Dorsolateral prefrontal cortex (tissue), 120 donors: ENCODE measurements at regions of chr13 and their contacts with region 1.

Region 1: GRCh38 chr13:23433171-23434153 is at the start of gene SACS:
- DNase-seq: peak in 9 of 10 donors; percentile 39 to 74 (median 52)
- H3K4me3 ChIP-seq: peak within 1 kb of the TSS; percentile 61 to 90 (median 79)
- H3K27ac ChIP-seq: peak within 1 kb of the TSS in 56 of 59 donors; percentile 7 to 91 (median 80)
- H3K27me3 ChIP-seq: no peaks in the 10 kb centered on the region
- CTCF ChIP-seq: peak in 7 of 56 donors; percentile 5 to 19 (median 11)
- total RNA-seq, gene SACS: 45.4 to 95.1 (median 74.8) TPM

Region 2: DNA sequence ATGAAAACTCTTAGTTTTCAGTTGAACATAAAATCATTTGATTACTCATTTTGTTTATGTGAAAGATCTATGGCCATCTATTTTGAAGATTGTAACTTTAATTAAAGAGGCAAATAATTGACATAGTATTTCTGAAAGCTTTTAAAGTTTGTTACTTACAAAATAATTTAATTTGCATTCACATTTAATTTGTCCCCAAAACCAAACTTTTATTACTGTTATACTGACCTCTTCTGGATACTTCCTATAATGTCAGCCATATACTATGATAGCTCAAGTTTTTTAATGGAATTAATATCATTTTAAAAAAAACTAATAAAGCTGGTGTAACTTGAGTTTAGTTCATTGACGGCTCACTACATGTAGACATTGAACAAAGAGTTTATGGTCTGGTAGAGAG is 257.5 kb before region 1 on chr13:
- intact Hi-C with region 1: no loop called
- DNase-seq: no peak
- H3K4me3 ChIP-seq: no peak overlapping the region
- H3K27ac ChIP-seq: no peak overlapping the region
- H3K27me3 ChIP-seq: no peaks in the 10 kb centered on the region
- CTCF ChIP-seq: peak in 48 of 56 donors; percentile 13 to 56 (median 39)

Region 3: GRCh38 chr13:23321535-23322241 is 111.8 kb before region 1 on chr13:
- intact Hi-C with region 1: loop called (anchors 2 to 5 kb)
- DNase-seq: peak in 3 of 10 donors; percentile 34 to 71 (median 39)
- H3K4me3 ChIP-seq: peak overlapping the region in 34 of 59 donors; percentile 3 to 52 (median 27)
- H3K27ac ChIP-seq: peak overlapping the region in 1 of 59 donors; percentile 2
- H3K27me3 ChIP-seq: no peaks in the 10 kb centered on the region
- CTCF ChIP-seq: no peak

Region 4: DNA sequence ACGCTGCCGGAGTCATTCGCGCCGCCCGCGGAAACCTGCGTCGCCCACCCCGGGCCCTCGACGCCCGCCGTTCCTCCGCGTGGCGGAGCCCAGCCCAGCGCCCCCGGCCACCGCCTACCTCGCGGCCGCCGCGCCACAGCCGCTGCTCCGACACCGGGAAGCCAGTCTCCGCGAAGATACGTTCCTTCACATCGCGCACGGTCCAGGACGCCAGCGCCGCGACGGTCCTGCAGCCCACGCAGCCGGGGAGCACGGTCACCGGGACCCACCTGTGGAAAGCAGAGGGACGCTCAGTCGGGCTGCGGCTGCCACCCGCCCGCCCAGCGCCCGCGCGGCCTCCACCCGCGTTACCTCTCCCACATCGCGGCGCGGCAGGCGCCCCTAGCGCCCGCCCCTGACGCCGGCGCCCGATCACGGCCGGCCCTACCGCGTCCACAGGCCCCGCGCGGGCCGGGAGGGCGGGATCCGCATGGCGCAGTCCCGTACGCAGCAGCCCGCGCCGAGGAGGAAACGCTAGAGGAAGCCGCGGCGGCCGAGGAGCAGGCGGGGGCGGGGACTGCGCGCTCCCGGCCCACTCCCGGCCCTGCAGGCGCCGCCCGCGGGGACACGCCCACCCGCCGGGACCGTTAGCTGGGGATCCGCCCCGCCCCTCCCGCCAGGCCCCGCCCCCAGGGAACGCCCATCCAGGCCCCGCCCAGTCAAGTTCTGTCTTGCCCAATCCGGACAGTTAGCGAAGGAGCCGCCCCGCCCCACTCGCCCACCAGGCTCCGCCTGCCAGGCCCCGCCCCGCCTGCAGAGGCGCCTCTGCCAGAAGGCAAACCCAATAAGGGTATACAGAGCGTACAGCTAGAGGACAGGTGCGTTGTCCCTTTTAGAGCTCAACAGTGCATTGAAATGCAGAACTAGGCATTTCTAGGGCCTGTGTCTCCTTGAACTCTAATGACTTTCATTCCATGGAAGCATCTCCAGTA is 58.2 kb before region 1 on chr13:
- intact Hi-C with region 1: loop called (anchors 5 kb)
- DNase-seq: peak; percentile 95 to 99 (median 96)
- H3K4me3 ChIP-seq: peak overlapping the region; percentile 59 to 98 (median 84)
- H3K27ac ChIP-seq: peak overlapping the region; percentile 0 to 94 (median 83)
- H3K27me3 ChIP-seq: no peaks in the 10 kb centered on the region
- CTCF ChIP-seq: peak in 39 of 56 donors; percentile 6 to 67 (median 35)

Region 5: DNA sequence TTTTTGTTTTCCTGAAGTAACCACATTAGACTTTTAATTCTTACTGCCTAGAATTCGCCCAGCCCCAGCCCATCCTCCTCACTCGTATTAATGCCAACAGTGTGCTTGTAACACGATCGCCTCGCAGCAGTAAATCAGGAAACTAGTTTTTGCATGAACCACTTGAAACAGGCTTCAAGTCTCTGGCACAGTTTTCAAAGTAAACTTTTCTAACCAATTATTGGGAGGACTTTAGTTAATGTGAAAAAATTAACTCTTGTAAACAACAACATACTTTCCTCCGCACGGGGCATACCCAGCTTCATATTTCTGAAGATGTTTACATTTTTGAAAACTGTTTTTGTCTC is 175.9 kb after region 1 on chr13:
- intact Hi-C with region 1: no loop called
- DNase-seq: no peak
- H3K4me3 ChIP-seq: peak overlapping the region in 21 of 59 donors; percentile 3 to 36 (median 13)
- H3K27ac ChIP-seq: peak overlapping the region in 14 of 59 donors; percentile 10 to 66 (median 35)
- H3K27me3 ChIP-seq: no peaks in the 10 kb centered on the region
- CTCF ChIP-seq: no peak